SK-N-SH (cell line): ENCODE measurements at regions of chr11 and their contacts with region 1.

Region 1: GRCh38 chr11:8070417-8071115 is 10.4 kb upstream of the TUB start:
- DNase-seq: peak; percentile 73
- H3K4me3 ChIP-seq: no peak overlapping the region
- H3K27ac ChIP-seq: peak overlapping the region in 1 of 2 experiments; percentile 99; a peak in 2 of 4 replicates
- H3K4me1 ChIP-seq: peaks cover 17 to 50% of the 10 kb centered on the region in 2 experiments
- H3K27me3 ChIP-seq: no peaks in the 10 kb centered on the region; the same call in 1 of the 2 replicates
- CTCF ChIP-seq: peak; percentile 59
- EP300 ChIP-seq: no peak
- RAD21 ChIP-seq: peak; percentile 87

Region 2: GRCh38 chr11:8056810-8057463 is 13.6 kb before region 1 on chr11:
- CTCF ChIA-PET with region 1: interaction called, 13 read pairs
- POLR2A ChIA-PET with region 1: interaction called, 12 read pairs
- DNase-seq: no peak
- H3K4me3 ChIP-seq: no peak overlapping the region
- H3K27ac ChIP-seq: peak overlapping the region in 1 of 2 experiments; percentile 64; a peak in 2 of 4 replicates
- H3K4me1 ChIP-seq: peaks cover 0 to 47% of the 10 kb centered on the region in 2 experiments; a peak in 1 of 4 replicates
- H3K27me3 ChIP-seq: no peaks in the 10 kb centered on the region
- CTCF ChIP-seq: no peak
- EP300 ChIP-seq: peak in 1 of 2 experiments; percentile 61; a peak in 2 of 4 replicates
- RAD21 ChIP-seq: 0 out of 2 replicates have a peak, but pooled peaks have one; percentile 6

Region 3: GRCh38 chr11:8080674-8081590 is 10.4 kb after region 1 on chr11 and contains the start of gene TUB:
- CTCF ChIA-PET with region 1: interaction called, 59 read pairs
- POLR2A ChIA-PET with region 1: interaction called, 16 read pairs
- DNase-seq: peak; percentile 97
- H3K4me3 ChIP-seq: peak within 1 kb of the TSS; percentile 67 to 73
- H3K27ac ChIP-seq: peak within 1 kb of the TSS in 1 of 2 experiments; percentile 92; a peak in 2 of 4 replicates
- H3K4me1 ChIP-seq: peaks cover 18 to 52% of the 10 kb centered on the region in 2 experiments; a peak in 3 of 4 replicates
- H3K27me3 ChIP-seq: no peaks in the 10 kb centered on the region
- CTCF ChIP-seq: no peak
- EP300 ChIP-seq: no peak
- RAD21 ChIP-seq: no peak
- polyA plus RNA-seq, gene TUB: 11.3 and 16.9 TPM in 2 replicates

Region 4: GRCh38 chr11:8087185-8087584 is 16.6 kb after region 1 on chr11:
- CTCF ChIA-PET with region 1: interaction called, 75 read pairs
- POLR2A ChIA-PET with region 1: interaction called, 16 read pairs
- DNase-seq: no peak
- H3K4me3 ChIP-seq: no peak overlapping the region
- H3K27ac ChIP-seq: peak overlapping the region in 1 of 2 experiments; percentile 92; a peak in 2 of 4 replicates
- H3K4me1 ChIP-seq: peaks cover 12 to 92% of the 10 kb centered on the region in 2 experiments; a peak in 3 of 4 replicates
- H3K27me3 ChIP-seq: no peaks in the 10 kb centered on the region
- CTCF ChIP-seq: peak; percentile 38; the same call in 1 of the 2 replicates
- EP300 ChIP-seq: no peak
- RAD21 ChIP-seq: peak; percentile 47